ENCODE measurements at regions of chr11 and their contacts with region 1.

Region 1: GRCh38 chr11:47642099-47642855 is at the start of gene MTCH2:
- DNase-seq: peak; percentile 86 to 97
- H3K4me3 ChIP-seq: peak within 1 kb of the TSS; percentile 69 to 77
- H3K27ac ChIP-seq: peak within 1 kb of the TSS; percentile 85 to 94
- H3K4me1 ChIP-seq: peaks cover 2 to 13% of the 10 kb centered on the region in 2 donors
- H3K27me3 ChIP-seq: no peaks in the 10 kb centered on the region
- CTCF ChIP-seq: peak in 1 of 3 experiments; percentile 35
- total RNA-seq, gene MTCH2: 55.9 TPM

Region 2: DNA sequence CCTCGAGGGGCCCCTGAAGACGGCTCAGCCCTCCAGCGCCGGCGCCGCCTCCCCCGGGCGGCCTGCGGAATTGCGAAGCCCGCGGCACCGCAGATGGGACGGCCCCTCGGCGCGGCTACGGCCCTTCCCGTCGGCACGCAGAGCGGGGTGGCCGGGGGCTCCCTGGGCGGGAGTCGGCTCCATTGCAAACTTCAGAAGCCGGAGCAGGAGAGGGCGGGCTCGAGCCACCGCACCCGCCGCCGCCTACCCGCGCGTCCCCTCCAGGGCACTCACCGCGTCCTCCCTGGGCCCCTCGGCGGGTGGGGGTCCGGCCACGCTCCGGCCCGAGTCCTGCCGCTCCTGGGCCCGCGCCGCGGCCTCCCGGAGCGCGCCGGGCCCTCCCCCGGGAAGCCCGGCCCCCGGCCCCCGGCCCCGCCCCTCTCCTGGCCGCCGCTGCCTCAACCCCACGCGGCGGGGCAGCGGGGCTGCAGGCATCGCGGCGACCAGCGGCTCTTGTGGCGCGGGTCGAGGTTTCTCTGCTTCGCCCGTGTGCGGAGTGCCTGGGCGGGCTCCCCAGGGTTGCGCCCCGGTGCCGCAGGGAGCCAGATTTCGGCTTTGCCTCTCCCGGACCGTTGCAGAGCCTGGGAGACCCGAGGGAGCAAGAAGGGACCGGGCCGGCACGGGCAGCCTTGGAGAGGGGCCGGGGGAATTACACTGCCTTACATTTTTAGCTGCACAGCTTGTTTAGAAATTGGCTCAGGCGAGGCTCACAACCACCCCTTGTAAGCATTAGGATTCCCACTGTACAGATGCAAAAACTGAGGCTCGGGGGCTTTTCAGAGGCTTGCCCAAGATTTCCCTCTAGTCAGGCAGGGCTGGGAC is 456.0 kb before region 1 on chr11 and contains the start of gene PACSIN3:
- intact Hi-C with region 1: loop called (anchors 10 kb)
- DNase-seq: no peak
- H3K4me3 ChIP-seq: peak within 1 kb of the TSS; percentile 72 to 87
- H3K27ac ChIP-seq: peak within 1 kb of the TSS; percentile 93 to 95
- H3K4me1 ChIP-seq: peaks cover 4 to 31% of the 10 kb centered on the region in 2 donors
- H3K27me3 ChIP-seq: no peaks in the 10 kb centered on the region
- CTCF ChIP-seq: peak in 1 of 3 experiments; percentile 18
- total RNA-seq, gene PACSIN3: 32.7 TPM

Region 3: GRCh38 chr11:47296045-47296444 is 346.2 kb before region 1 on chr11:
- intact Hi-C with region 1: no loop called
- DNase-seq: no peak
- H3K4me3 ChIP-seq: no peak overlapping the region
- H3K27ac ChIP-seq: no peak overlapping the region
- H3K4me1 ChIP-seq: no peaks in the 10 kb centered on the region
- H3K27me3 ChIP-seq: no peaks in the 10 kb centered on the region
- CTCF ChIP-seq: no peak

Region 4: DNA sequence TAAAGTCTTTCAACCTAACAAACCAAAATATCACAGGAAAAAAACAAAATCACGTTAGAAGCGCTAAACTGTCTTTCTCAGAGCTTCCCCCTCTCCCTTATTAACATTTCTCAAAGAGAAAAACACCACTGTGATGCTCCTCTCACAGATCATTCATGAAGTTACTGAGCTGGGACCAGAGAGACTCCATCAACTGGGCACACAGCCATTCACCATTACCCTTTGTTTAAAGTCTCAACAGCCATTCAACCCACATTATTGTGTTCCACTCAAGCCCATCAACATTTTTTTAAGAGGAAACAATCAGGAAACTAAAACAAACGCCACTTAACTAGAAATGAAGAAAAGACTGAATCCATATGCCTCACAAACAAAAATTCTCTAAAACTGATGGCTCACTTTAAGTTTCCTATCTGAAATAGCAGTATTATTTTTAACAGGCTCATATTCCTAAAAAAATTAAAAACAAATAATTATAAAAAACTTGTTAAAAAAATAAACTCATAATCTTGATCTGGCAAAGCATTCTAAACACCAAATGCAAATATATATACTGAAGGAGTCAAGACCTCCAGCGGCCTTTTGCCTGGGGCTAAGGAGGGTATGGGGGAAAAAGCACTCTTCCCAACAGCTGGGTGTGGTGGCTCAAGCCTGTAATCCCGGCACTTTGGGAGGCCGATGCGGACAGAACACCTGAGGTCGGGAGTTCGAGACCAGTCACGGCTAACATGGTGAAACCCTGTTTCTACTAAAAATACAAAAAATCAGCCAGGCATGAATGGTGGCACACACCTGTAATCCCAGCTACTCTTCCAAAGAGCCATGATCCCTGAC is 103.3 kb before region 1 on chr11:
- intact Hi-C with region 1: no loop called
- DNase-seq: no peak
- H3K4me3 ChIP-seq: no peak overlapping the region
- H3K27ac ChIP-seq: no peak overlapping the region
- H3K4me1 ChIP-seq: peaks cover 0 to 31% of the 10 kb centered on the region in 2 donors
- H3K27me3 ChIP-seq: no peaks in the 10 kb centered on the region
- CTCF ChIP-seq: no peak

Region 5: DNA sequence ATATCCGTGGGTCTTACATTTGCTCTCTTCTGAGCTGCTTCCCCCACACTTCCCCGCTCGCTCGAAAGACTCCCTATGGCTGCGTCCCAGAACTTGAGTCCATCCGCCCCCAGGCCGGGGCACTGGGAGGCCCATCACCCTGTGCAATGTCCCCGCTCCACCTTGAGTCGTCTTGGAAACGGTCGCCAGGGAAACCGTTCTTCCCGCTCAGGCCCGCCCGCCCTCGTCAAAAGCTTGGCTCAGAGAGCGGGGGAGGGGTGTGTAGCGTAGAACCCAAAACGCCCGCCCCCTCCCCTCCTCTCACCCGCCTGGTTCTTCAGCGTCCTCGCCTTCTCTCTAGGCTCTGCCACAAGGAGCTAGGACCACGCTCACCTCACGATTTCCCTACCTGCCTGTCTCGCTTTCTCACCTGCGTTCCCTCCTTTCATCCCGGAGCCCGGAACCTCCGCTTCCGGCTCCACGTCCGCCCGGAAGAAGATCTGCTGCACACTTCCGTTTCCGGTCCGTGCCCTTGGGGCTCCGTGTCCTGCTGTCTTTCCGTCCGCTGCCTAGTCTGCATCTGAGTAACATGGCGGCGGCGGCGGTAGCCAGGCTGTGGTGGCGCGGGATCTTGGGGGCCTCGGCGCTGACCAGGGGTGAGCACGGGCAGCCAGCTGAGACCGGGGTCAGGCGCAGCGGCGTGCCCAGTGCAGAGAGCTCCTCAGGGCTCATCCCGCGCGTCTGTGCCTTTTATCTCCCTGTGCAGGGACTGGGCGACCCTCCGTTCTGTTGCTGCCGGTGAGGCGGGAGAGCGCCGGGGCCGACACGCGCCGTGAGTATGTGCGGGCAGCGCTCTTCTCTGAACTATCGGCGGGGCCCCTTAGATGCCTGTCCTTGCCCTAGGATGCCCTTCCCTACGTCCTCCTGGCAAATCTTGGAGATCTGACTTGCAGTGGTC is 63.5 kb before region 1 on chr11 and contains the starts of genes KBTBD4 and NDUFS3:
- intact Hi-C with region 1: loop called (anchors 2 kb)
- DNase-seq: peak; percentile 57 to 92
- H3K4me3 ChIP-seq: peak within 1 kb of the TSS; percentile 74 to 93
- H3K27ac ChIP-seq: peak within 1 kb of the TSS; percentile 75 to 83
- H3K4me1 ChIP-seq: peaks cover 14 to 15% of the 10 kb centered on the region in 2 donors
- H3K27me3 ChIP-seq: no peaks in the 10 kb centered on the region
- CTCF ChIP-seq: no peak
- total RNA-seq, gene KBTBD4: 14.8 TPM
- total RNA-seq, gene NDUFS3: 19.9 TPM

Region 6: DNA sequence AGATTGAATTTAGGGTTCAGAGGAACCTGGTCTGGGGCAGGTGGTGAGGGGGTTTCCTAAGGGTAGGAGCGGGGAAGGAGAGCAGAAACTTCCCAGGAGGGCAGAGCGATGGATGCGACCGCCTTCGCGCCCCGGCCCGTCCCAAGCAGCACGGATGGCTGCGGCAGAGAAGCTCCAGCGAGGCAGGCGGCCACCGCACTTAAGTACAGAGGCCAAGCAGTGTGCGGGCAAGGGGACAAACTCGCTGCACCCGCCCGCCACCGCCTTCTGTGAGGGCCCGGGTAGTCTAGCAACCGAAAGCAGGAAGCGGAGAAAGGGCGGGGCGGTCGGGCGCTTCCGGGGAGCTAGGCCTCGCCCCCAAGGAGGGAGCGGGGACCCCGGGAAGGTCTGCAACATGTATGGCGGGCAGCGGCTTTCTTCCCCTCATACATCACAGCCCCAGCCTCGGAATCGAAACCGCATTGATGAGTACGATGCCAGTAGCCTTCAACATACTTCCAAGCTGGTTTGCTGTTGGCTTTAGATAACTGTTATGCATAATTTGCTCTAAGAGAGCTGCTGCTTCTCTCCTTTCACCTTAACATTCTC is 72.9 kb after region 1 on chr11 and contains the start of gene AGBL2:
- intact Hi-C with region 1: loop called (anchors 1 kb)
- DNase-seq: peak; percentile 23 to 83
- H3K4me3 ChIP-seq: peak within 1 kb of the TSS; percentile 74 to 75
- H3K27ac ChIP-seq: peak within 1 kb of the TSS; percentile 43 to 57
- H3K4me1 ChIP-seq: peaks cover 0 to 5% of the 10 kb centered on the region in 2 donors
- H3K27me3 ChIP-seq: no peaks in the 10 kb centered on the region
- CTCF ChIP-seq: no peak
- total RNA-seq, gene AGBL2: not detected

Region 7: GRCh38 chr11:47724041-47724729 is 81.9 kb after region 1 on chr11:
- intact Hi-C with region 1: loop called (anchors 2 kb)
- DNase-seq: peak in 1 of 2 donors; percentile 76
- H3K4me3 ChIP-seq: no peak overlapping the region
- H3K27ac ChIP-seq: peak overlapping the region; percentile 30 to 73
- H3K4me1 ChIP-seq: peaks cover 0 to 4% of the 10 kb centered on the region in 2 donors
- H3K27me3 ChIP-seq: no peaks in the 10 kb centered on the region
- CTCF ChIP-seq: no peak

Region 8: DNA sequence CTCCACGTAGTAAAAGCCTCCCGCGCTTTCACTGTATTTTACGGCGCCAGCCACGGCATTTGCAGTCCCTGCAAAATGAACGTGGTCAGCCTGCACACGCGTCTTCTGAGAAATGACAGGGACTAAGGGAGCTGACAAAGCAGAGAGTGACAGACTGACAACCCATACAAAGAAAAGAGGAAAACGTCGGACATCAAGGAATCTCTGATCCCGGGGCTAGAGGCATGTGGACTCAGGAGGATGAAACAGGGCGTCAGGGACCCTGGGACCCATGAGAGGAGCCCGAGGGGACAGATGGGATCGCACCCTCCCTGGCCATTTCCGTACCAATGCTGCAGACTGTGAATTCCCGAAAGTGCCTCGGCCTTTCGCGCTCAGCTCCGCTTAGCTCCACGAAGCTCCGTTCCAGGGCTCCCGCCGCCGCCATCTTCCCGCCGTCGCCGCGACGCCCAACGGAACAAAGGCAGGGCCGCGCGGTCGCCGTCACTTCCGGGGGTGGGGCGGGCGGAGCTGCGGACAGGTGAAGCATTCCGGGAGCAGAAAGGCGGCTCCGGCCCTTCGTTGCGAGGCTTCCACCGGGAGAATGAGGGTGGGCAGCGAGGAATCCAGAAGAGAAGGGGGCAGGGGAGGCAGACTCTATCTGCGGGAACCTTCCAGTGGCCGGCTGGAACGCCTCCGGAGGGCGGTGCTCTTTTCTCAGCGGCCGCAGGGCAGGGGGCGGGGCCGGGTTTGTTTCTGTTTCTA is 205.8 kb after region 1 on chr11 and contains the start of gene NUP160:
- intact Hi-C with region 1: loop called (anchors 10 kb)
- DNase-seq: peak; percentile 32 to 92
- H3K4me3 ChIP-seq: peak within 1 kb of the TSS; percentile 80 to 91
- H3K27ac ChIP-seq: peak within 1 kb of the TSS; percentile 87 to 96
- H3K4me1 ChIP-seq: peaks cover 4 to 11% of the 10 kb centered on the region in 2 donors
- H3K27me3 ChIP-seq: no peaks in the 10 kb centered on the region
- CTCF ChIP-seq: no peak
- total RNA-seq, gene NUP160: 14.0 TPM